GM12878 (cell line): ENCODE measurements at regions of chr3 and their contacts with region 1.

Region 1: DNA sequence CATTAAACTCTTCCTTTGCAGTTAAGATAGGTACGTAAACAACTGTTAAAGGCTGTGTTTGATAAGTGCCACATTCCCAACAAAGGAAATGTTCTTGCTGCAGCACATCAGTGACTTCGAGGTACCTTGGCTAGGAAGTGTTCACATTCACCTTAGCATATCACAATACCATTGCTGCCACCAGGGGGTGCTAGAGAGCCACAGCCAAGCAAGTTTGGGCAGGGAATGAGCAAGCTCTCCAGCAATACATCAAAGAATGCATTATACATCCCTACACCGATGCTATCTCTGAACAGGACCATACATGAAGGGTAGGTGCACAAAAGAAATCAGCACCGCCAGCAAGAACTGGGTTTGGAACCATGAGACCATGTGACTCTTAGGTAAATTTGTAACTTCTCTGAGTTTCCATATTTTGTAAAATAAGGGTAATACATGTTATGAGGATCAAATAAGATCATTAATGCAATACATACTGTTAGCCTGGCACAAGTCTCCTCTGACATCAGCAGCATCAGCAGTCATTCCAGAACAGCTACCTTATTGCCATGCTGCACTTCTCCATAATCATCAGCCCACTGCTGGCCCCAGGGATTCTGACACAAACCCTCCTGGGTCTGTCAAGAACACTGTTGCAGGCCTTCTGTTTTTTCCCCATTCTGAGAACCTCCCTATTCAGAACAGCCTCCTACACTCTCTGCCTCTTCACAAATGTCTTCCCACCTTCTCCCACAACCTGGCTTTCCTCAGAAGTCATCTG is 37.6 kb downstream of the RYK start:
- DNase-seq: peak; percentile 51
- ATAC-seq: peak; percentile 97
- H3K4me3 ChIP-seq: no peak overlapping the region
- H3K27ac ChIP-seq: no peak overlapping the region
- H3K4me1 ChIP-seq: no peaks in the 10 kb centered on the region; the same call in 1 of the 2 replicates
- H3K27me3 ChIP-seq: no peaks in the 10 kb centered on the region
- CTCF ChIP-seq: peak; percentile 90 to 96 (median 96)
- EP300 ChIP-seq: no peak
- POLR2A ChIP-seq: no peak
- RAD21 ChIP-seq: peak; percentile 85

Region 2: DNA sequence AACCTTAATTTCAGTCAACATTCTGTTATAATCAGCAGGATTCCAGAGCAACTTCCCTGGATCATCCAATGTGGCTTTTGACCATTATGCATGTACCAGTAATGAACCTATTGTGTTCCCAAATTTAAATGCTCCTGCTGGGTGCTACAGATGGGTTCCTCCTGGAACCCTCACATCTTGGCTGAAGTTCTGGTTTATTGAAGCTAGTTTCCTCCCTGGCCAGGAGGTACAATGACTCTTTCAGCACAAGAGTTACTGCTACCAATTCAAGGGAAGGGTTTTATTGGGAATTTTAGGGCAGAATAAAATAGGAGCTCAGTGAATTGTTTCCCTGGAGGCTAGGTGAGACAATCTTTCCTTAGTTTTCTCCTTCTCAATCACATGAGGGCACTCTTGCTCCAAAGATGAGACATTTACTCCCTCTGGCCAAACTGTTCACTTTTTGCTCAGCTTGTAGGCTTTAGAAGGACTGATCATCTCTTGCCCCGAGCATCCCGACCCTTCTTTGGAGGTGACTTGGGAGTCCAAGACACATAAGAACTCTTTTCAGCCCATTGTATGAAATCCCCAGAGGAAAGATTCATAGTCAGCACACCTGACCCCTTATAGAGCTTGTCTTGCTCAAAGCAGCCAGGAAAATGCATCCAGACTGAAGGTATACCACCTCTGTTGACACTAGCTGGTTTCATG is 1482.0 kb before region 1 on chr3:
- CTCF ChIA-PET with region 1: interaction called, 3 read pairs
- POLR2A ChIA-PET with region 1: no interaction called
- RAD21 ChIA-PET with region 1: no interaction called
- SMC1A ChIA-PET with region 1: no interaction called
- in situ Hi-C with region 1: loop called (anchors 25 kb)
- intact Hi-C with region 1: loop called (anchors 10 kb)
- DNase-seq: no peak
- ATAC-seq: peak; percentile 70
- H3K4me3 ChIP-seq: no peak overlapping the region
- H3K27ac ChIP-seq: no peak overlapping the region
- H3K4me1 ChIP-seq: no peaks in the 10 kb centered on the region
- H3K27me3 ChIP-seq: no peaks in the 10 kb centered on the region; a peak in 2 of 4 replicates
- CTCF ChIP-seq: peak in 2 of 3 experiments; percentile 40 to 57; a peak in 3 of 6 replicates
- EP300 ChIP-seq: no peak
- POLR2A ChIP-seq: no peak
- RAD21 ChIP-seq: peak; percentile 77

Region 3: DNA sequence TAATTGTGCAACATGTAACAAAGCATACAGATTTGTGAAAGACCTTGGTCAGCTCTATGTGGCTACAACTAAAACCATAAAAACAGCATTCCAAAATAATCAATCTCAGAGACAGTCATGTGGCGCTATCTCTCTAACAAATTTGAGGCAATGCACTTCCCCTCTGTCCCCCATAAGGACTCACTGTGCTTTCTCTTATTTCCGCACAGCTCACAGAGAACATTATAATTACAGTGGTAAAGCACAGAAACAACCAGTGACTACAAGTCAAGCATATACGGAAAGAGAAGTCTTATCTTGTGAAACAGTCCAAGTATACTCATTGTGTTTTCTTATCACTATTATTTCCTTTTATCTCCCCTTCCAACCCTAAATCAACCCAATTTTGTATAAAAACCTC is 26.7 kb before region 1 on chr3:
- CTCF ChIA-PET with region 1: interaction called, 11 read pairs
- POLR2A ChIA-PET with region 1: no interaction called
- RAD21 ChIA-PET with region 1: no interaction called
- SMC1A ChIA-PET with region 1: no interaction called
- in situ Hi-C with region 1: no loop called
- intact Hi-C with region 1: no loop called
- DNase-seq: no peak
- ATAC-seq: no peak
- H3K4me3 ChIP-seq: no peak overlapping the region
- H3K27ac ChIP-seq: no peak overlapping the region
- H3K4me1 ChIP-seq: no peaks in the 10 kb centered on the region
- H3K27me3 ChIP-seq: no peaks in the 10 kb centered on the region
- CTCF ChIP-seq: no peak
- EP300 ChIP-seq: no peak
- POLR2A ChIP-seq: no peak
- RAD21 ChIP-seq: no peak

Region 4: GRCh38 chr3:134239538-134239937 is 26.5 kb after region 1 on chr3:
- CTCF ChIA-PET with region 1: interaction called, 33 read pairs
- POLR2A ChIA-PET with region 1: no interaction called
- RAD21 ChIA-PET with region 1: interaction called, 8 read pairs
- SMC1A ChIA-PET with region 1: interaction called, 8 read pairs
- in situ Hi-C with region 1: no loop called
- intact Hi-C with region 1: no loop called
- DNase-seq: no peak
- ATAC-seq: peak; percentile 49
- H3K4me3 ChIP-seq: no peak overlapping the region
- H3K27ac ChIP-seq: no peak overlapping the region
- H3K4me1 ChIP-seq: peaks cover 7% of the 10 kb centered on the region
- H3K27me3 ChIP-seq: no peaks in the 10 kb centered on the region
- CTCF ChIP-seq: no peak
- EP300 ChIP-seq: no peak
- POLR2A ChIP-seq: no peak
- RAD21 ChIP-seq: no peak

Region 5: GRCh38 chr3:134300515-134300914 is 87.4 kb after region 1 on chr3:
- CTCF ChIA-PET with region 1: interaction called, 23 read pairs
- POLR2A ChIA-PET with region 1: no interaction called
- RAD21 ChIA-PET with region 1: interaction called, 4 read pairs
- SMC1A ChIA-PET with region 1: interaction called, 4 read pairs
- in situ Hi-C with region 1: no loop called
- intact Hi-C with region 1: loop called (anchors 5 kb)
- DNase-seq: no peak
- ATAC-seq: peak; percentile 31; the same call in 1 of the 3 replicates
- H3K4me3 ChIP-seq: no peak overlapping the region
- H3K27ac ChIP-seq: no peak overlapping the region
- H3K4me1 ChIP-seq: no peaks in the 10 kb centered on the region
- H3K27me3 ChIP-seq: peaks cover 1 to 4% of the 10 kb centered on the region in 2 experiments; a peak in 2 of 4 replicates
- CTCF ChIP-seq: no peak
- EP300 ChIP-seq: no peak
- POLR2A ChIP-seq: no peak
- RAD21 ChIP-seq: no peak

Region 6: DNA sequence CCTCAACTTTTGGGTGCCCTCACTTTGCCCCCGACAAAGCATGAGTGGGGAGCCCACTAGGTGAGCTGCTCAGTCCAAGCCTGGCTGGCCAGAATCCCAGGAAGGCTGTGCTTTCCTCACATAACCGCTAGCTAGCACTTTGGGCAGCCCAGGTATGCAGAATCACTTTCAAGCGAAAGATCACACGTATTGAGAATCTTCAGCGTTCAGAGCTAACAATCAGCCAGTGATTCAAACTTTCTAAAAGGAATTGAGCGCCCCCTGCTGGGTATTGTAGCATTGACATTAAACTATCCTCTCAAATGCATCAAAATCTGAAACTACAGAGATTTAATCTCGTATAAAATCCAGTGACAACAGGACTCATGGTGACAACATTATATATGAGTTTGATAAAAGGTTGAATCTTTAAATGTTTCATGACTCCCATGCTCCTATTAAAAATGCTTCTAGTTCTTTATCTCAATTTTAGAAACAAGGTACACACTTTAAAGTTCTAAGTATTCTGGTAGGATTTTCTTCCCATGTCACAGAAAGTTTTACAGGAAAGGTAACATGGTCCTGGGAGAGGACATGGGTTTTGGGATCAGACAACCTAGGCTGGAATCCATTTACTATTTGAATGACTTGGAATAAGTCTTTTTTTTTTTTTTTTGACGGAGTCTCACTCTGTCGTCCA is 260.9 kb after region 1 on chr3:
- CTCF ChIA-PET with region 1: interaction called, 36 read pairs
- POLR2A ChIA-PET with region 1: no interaction called
- RAD21 ChIA-PET with region 1: interaction called, 8 read pairs
- SMC1A ChIA-PET with region 1: interaction called, 20 read pairs
- in situ Hi-C with region 1: no loop called
- intact Hi-C with region 1: loop called (anchors 1 kb)
- DNase-seq: no peak
- ATAC-seq: peak; percentile 88
- H3K4me3 ChIP-seq: no peak overlapping the region
- H3K27ac ChIP-seq: no peak overlapping the region
- H3K4me1 ChIP-seq: no peaks in the 10 kb centered on the region
- H3K27me3 ChIP-seq: no peaks in the 10 kb centered on the region
- CTCF ChIP-seq: peak; percentile 53 to 76 (median 65)
- EP300 ChIP-seq: no peak
- POLR2A ChIP-seq: no peak
- RAD21 ChIP-seq: peak; percentile 76

Region 7: DNA sequence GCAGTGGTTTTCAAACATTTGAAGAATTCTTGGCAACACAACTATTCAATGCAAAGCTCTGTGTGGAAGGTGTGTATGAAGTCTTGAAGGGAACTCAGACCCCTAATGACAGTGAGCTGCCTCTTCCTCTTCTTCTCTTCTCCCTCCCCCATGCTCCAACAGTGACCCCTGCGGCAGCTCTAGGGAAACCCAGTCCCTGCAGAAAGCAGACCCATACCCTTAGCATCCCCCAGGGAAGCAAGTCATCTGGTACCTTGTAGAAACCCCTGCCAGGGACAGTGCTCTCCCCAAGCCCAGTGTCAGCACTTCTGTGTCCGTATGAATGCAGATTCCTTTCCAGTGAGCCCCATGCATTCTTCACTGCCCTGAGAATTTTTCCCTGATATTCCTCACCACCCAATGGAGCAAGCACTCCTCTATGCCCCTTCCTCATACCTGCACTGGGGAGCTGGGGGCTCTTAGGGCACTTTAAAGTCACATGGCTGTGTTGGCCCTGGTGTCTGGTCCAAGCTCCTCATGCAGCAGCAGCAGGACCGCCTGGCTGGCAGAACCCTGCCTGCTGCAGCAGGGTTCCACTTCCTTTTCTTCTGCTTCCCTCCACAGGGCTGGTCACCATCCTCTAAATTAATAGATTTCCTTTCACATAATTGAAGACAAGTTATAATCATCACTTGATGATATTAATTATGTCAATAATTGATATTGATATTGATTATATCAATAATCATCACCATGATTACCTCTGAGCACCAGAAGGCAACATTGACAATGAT is 1024.5 kb after region 1 on chr3:
- CTCF ChIA-PET with region 1: no interaction called
- POLR2A ChIA-PET with region 1: no interaction called
- RAD21 ChIA-PET with region 1: no interaction called
- SMC1A ChIA-PET with region 1: no interaction called
- in situ Hi-C with region 1: no loop called
- intact Hi-C with region 1: no loop called
- DNase-seq: no peak
- ATAC-seq: peak; percentile 44
- H3K4me3 ChIP-seq: no peak overlapping the region
- H3K27ac ChIP-seq: no peak overlapping the region
- H3K4me1 ChIP-seq: no peaks in the 10 kb centered on the region
- H3K27me3 ChIP-seq: no peaks in the 10 kb centered on the region
- CTCF ChIP-seq: peak in 1 of 3 experiments; percentile 36; a peak in 2 of 6 replicates
- EP300 ChIP-seq: no peak
- POLR2A ChIP-seq: no peak
- RAD21 ChIP-seq: peak; percentile 40; the same call in 1 of the 2 replicates